ENCODE measurements at regions of chr9 and their contacts with region 1.

Region 1: GRCh38 chr9:119556129-119556875 is 187.1 kb upstream of the BRINP1 start:
- DNase-seq: peak; percentile 61 to 80
- ATAC-seq: peak; percentile 79 to 95 (median 88)
- H3K4me3 ChIP-seq: peak overlapping the region in 9 of 10 donors; percentile 2 to 47 (median 42)
- H3K27ac ChIP-seq: peak overlapping the region in 3 of 10 donors; percentile 2 to 28 (median 9)
- H3K4me1 ChIP-seq: peaks cover 0 to 10% (median 6%) of the 10 kb centered on the region in 9 donors
- H3K27me3 ChIP-seq: peaks cover 0 to 38% (median 9%) of the 10 kb centered on the region in 7 donors
- CTCF ChIP-seq: peak; percentile 72 to 96 (median 92)

Region 2: DNA sequence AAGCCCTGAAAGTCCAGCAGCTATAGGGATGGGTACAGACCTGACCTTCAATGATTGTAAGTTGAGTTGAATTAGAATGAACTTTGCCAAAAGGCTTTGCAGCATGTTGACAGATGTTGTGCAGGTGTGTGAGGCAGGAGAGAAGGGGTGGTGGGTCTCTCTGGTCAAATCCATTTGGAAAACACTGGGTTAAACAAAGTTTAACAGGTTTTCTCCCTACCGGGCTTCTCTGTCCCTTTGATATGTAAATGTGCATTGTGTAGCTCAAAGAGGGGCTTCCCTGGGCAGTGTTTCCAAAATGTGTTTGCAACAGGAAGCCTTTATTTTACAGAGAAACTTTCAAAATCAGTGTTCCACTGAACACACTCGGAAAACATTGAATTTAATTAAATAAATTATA is 115.0 kb before region 1 on chr9:
- intact Hi-C with region 1: no loop called
- DNase-seq: no peak
- ATAC-seq: no peak
- H3K4me3 ChIP-seq: no peak overlapping the region
- H3K27ac ChIP-seq: no peak overlapping the region
- H3K4me1 ChIP-seq: no peaks in the 10 kb centered on the region
- H3K27me3 ChIP-seq: peaks cover 0 to 9% (median 0%) of the 10 kb centered on the region in 7 donors
- CTCF ChIP-seq: no peak

Region 3: DNA sequence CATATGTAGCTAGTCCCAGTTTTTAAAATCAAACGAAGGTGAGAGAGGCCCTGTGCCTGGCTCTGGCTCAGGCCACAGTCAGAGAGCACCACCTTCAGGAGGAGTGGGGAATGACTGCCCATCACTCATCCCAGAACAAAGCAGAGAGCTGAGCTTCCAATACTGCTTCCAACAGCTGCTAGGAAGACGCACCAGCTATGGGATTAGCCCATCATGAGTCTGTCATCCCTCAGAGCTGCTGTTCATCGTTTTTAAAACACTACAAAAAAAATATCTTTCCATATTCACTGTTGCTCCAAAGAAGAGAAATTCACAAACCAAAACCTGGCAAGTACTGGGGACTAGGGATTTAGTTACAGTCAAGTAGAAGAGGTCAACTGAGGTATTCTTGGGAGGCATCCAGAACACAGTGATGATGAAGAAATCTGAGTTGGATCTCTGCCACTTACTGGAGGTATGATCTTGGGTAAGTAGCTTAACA is 921.3 kb after region 1 on chr9:
- intact Hi-C with region 1: loop called in 4 of 10 experiments (anchors 2 to 10 kb)
- DNase-seq: peak; percentile 36 to 42
- ATAC-seq: peak; percentile 69 to 87 (median 77)
- H3K4me3 ChIP-seq: no peak overlapping the region
- H3K27ac ChIP-seq: peak overlapping the region in 1 of 10 donors; percentile 43
- H3K4me1 ChIP-seq: peaks cover 0 to 63% (median 24%) of the 10 kb centered on the region in 9 donors
- H3K27me3 ChIP-seq: no peaks in the 10 kb centered on the region
- CTCF ChIP-seq: peak; percentile 61 to 98 (median 90)

Measured in heart right ventricle (tissue), 16 donors.